Activated CD8-positive, alpha-beta memory T cell treated with anti-CD3 and anti-CD28 coated beads, Interleukin-2, amount 10 ng/mL, durations not matched to agents 7 days and 5 days (primary cell): ENCODE measurements at regions of chr7 and their contacts with region 1.

Region 1: DNA sequence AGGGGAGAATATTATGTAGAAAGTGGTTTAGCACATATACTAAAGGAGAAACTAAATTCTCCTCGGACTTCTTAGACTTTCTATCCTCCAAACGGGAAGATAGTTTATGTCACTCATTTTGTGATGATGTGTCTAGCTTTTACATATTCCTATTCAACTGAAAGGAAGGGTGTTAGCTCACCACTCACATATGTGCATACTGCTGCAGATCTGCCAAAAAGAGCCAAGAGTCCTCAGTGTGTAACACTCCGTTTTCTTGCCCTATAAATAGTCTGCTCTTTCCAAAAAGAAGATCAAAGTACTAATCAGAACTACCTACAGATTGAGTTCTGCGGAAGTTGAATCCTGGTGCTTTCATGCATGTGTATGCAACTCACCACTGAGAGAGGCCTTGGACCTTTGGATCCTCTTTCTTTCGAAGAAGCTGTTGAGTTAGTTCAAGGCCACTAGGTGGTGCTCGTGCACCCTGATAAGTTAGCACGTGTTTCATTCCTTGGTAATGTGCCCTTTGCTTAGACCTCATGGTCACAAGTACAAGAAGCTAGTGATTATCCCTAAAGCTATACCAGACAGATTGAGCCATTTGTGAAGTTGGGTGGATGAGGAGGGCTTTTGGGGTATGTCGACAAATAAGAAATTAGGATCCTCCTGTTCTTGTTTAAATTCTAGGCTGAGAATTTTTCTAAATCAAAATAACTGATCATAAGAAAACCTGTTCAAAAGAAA is 14.1 kb downstream of the YAE1 start:
- DNase-seq: peak; percentile 78
- ATAC-seq: peak; percentile 87
- H3K4me3 Mint-ChIP-seq: no peak overlapping the region
- H3K27ac Mint-ChIP-seq: no peak overlapping the region
- H3K4me1 Mint-ChIP-seq: peaks cover 5% of the 10 kb centered on the region
- H3K27me3 Mint-ChIP-seq: no peaks in the 10 kb centered on the region

Region 2: GRCh38 chr7:39566023-39566921 is 14.0 kb before region 1 on chr7 and contains the start of gene YAE1:
- CTCF ChIA-PET with region 1: interaction called, 18 read pairs
- DNase-seq: peak; percentile 86
- ATAC-seq: peak; percentile 97
- H3K4me3 Mint-ChIP-seq: peak within 1 kb of the TSS; percentile 95
- H3K27ac Mint-ChIP-seq: peak within 1 kb of the TSS; percentile 95
- H3K4me1 Mint-ChIP-seq: peaks cover 21% of the 10 kb centered on the region
- H3K27me3 Mint-ChIP-seq: no peaks in the 10 kb centered on the region
- total RNA-seq, gene YAE1: 10.0 to 10.5 TPM

Region 3: DNA sequence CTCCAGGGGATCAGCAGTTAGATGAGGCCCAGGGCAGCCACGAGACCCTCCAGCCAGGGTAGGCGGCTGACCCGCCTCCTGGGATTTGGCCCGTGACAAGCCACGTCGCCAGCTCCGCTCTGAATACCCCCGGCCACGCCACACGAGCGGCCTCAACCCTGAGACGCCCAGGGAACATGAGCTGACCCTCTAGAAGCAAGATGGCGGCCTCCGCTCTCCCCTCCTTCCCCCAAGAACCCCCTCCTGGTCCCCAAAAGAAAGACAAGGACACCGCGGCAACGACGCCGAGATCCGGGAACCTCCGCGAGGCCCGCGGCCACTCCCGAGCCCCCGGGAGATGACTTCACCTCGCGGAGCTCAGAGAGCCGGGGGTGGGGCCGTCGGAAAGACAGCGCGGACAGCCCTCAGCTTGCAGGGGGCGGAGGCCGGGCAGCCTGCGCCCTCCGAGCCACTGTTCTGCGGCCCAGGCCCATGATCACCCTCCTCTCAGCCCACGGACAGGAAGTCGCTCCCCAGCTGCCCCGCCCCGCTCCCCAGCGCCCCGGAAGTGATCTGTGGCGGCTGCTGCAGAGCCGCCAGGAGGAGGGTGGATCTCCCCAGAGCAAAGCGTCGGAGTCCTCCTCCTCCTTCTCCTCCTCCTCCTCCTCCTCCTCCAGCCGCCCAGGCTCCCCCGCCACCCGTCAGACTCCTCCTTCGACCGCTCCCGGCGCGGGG is 42.9 kb after region 1 on chr7 and contains the start of gene RALA:
- CTCF ChIA-PET with region 1: interaction called, 27 read pairs
- DNase-seq: peak; percentile 94
- ATAC-seq: peak; percentile 96
- H3K4me3 Mint-ChIP-seq: peak within 1 kb of the TSS; percentile 92
- H3K27ac Mint-ChIP-seq: peak within 1 kb of the TSS; percentile 92
- H3K4me1 Mint-ChIP-seq: peaks cover 36% of the 10 kb centered on the region
- H3K27me3 Mint-ChIP-seq: peaks cover 2% of the 10 kb centered on the region
- total RNA-seq, gene RALA: 22.3 to 32.9 TPM

Region 4: GRCh38 chr7:39732837-39733804 is 152.8 kb after region 1 on chr7:
- CTCF ChIA-PET with region 1: interaction called, 316 read pairs
- DNase-seq: peak; percentile 97
- ATAC-seq: peak; percentile 96
- H3K4me3 Mint-ChIP-seq: peak overlapping the region; percentile 76
- H3K27ac Mint-ChIP-seq: peak overlapping the region; percentile 95
- H3K4me1 Mint-ChIP-seq: peaks cover 36% of the 10 kb centered on the region
- H3K27me3 Mint-ChIP-seq: no peaks in the 10 kb centered on the region

Region 5: GRCh38 chr7:40057292-40057691 is 477.0 kb after region 1 on chr7:
- CTCF ChIA-PET with region 1: interaction called, 13 read pairs
- DNase-seq: no peak
- ATAC-seq: no peak
- H3K4me3 Mint-ChIP-seq: no peak overlapping the region
- H3K27ac Mint-ChIP-seq: no peak overlapping the region
- H3K4me1 Mint-ChIP-seq: peaks cover 6% of the 10 kb centered on the region
- H3K27me3 Mint-ChIP-seq: no peaks in the 10 kb centered on the region